Posterior cingulate gyrus (tissue), 11 donors: ENCODE measurements at regions of chr14 and their contacts with region 1.

Region 1: DNA sequence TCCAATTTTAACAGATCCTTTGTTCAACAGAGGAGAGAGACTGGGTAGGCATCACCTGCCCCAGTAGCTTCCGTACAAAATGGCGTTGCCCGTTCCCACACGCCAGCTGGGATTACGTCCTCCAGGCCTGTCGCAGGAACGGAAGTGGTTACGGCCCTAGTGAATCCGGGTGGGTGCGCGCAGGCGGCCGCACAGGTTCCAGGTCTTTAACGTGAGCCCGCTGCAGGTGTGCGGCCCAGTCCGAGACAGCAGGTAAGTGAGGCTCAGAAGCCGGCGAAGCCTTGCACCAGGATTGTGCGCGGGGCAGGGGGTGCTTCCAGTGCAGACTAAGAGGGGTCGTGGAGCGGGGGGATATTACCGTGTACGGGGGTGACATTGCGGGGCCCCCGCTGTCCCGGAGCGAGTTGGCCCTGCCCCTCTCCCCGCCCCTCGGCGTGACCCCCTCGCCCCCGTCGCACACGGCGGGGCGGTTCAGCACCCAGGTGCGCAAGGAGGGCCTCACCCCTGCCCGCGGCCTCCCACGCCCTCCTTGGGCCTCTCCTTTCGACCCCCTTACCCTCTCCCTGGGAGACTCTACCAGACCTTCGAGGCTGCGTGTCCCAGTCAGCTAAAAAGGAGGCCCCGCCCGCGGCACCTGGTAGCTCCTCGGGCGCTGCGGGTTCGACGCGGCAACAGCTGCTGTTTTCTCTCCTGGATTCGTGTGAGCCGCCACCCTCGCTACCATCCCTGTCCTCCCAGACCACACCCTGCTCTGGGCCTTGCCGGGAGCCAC is at the start of gene EXD2:
- DNase-seq: peak; percentile 84 to 98 (median 91)

Region 2: GRCh38 chr14:69090187-69090789 is 101.2 kb before region 1 on chr14:
- intact Hi-C with region 1: no loop called
- DNase-seq: no peak

Region 3: DNA sequence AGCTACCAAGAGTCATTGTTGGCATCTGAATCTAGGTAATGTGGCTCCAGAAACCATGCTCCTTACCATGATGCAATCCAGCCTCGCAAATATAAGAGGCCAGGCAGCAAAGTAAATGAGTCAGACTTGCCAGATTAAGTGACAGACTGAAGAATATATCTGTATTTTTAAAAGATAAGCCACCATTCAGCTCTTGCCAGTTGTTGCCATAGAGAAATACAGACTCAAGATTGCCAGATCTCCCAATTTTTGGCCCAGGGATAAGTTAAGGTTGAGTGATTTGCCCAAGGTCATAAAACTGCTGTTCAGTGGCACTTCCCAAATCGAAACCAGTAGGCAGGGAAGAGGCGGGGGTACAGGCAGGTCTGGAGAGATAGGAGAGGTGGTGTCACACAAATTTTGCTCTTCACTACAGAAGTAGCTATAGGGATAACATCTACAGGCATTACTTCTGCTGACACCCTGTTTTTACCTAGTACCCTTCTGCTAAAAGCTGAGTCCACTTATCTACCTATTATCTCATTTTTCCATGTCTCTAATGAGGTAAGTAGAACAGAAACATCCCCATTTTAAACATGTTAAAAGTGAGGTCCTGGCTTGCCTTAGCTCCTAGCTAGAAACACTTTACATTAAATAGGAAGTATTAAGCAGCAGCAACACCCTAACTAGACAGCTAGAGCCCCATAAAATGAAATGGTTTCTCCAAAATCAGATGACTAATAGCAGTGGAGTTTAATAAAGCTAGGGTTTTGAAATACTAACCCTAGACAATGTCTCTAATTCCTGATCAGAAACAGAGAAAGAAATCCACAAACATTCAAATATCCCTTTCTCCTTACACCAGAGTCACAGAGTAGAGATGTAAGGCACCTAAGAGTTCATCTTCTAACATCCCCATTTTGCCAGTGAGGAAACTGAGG is 58.1 kb before region 1 on chr14:
- intact Hi-C with region 1: loop called (anchors 10 kb)
- DNase-seq: no peak

Region 4: GRCh38 chr14:69153131-69153872 is 38.2 kb before region 1 on chr14:
- intact Hi-C with region 1: loop called (anchors 2 kb)
- DNase-seq: peak; percentile 67 to 98 (median 88)

Region 5: GRCh38 chr14:69398053-69398817 is 206.7 kb after region 1 on chr14 and contains the starts of genes ERH and SLC39A9:
- intact Hi-C with region 1: loop called (anchors 5 kb)
- DNase-seq: peak; percentile 92 to 99 (median 97)